ENCODE measurements at regions of chr1 and their contacts with region 1.

Region 1: GRCh38 chr1:98048244-98048643 is 127.4 kb upstream of the DPYD start:
- DNase-seq: peak; percentile 78
- H3K4me3 Mint-ChIP-seq: peak overlapping the region; percentile 51
- H3K27ac Mint-ChIP-seq: no peak overlapping the region
- H3K4me1 Mint-ChIP-seq: peaks cover 17% of the 10 kb centered on the region
- H3K27me3 Mint-ChIP-seq: no peaks in the 10 kb centered on the region
- CTCF ChIP-seq: no peak

Region 2: GRCh38 chr1:97145321-97145956 is 902.8 kb before region 1 on chr1:
- CTCF ChIA-PET with region 1: interaction called, 3 read pairs
- POLR2A ChIA-PET with region 1: no interaction called
- intact Hi-C with region 1: loop called (anchors 10 kb)
- DNase-seq: peak; percentile 76
- H3K4me3 Mint-ChIP-seq: peak overlapping the region; percentile 25
- H3K27ac Mint-ChIP-seq: peak overlapping the region; percentile 93
- H3K4me1 Mint-ChIP-seq: peaks cover 40% of the 10 kb centered on the region
- H3K27me3 Mint-ChIP-seq: no peaks in the 10 kb centered on the region
- CTCF ChIP-seq: no peak

Region 3: DNA sequence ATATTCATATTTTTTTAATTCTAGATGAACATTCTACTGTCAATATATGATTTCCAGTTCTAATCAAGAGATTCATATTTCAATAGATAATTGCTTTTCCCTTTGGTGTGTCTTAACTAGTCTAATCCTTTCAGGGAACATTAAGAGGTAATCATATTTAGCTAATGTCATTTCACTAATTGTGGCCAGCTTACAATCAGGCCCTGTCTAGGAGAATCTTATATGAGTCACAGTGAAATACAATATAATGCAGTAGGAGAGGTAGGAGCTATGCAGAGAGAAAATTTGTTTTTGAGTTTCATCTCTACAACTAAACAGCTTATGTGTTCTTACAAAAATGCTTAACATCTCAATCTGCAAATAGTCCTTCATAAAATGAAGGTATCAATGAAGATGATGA is 213.3 kb before region 1 on chr1:
- CTCF ChIA-PET with region 1: no interaction called
- POLR2A ChIA-PET with region 1: no interaction called
- intact Hi-C with region 1: loop called (anchors 5 kb)
- DNase-seq: no peak
- H3K4me3 Mint-ChIP-seq: no peak overlapping the region
- H3K27ac Mint-ChIP-seq: no peak overlapping the region
- H3K4me1 Mint-ChIP-seq: no peaks in the 10 kb centered on the region
- H3K27me3 Mint-ChIP-seq: no peaks in the 10 kb centered on the region
- CTCF ChIP-seq: no peak

Region 4: DNA sequence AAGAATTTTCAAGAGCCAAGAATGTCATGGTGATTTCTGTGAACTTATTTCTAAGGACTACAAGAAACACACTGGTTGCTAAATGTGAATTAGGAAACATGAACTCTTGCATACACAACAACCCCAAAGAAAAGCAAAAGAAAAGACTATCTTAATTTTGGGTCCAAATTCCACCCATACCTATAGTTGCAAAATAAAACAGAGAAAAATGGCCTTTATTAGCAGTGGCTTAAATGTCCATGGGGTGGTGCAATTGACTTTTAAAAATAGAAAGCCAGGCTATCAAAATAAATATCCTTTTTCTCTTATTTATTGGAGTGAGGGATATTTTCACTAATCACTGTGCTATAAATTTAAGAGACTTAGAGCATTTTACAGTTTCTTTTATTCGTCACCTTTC is 46.5 kb before region 1 on chr1:
- CTCF ChIA-PET with region 1: no interaction called
- POLR2A ChIA-PET with region 1: no interaction called
- intact Hi-C with region 1: loop called (anchors 5 kb)
- DNase-seq: peak; percentile 3
- H3K4me3 Mint-ChIP-seq: no peak overlapping the region
- H3K27ac Mint-ChIP-seq: no peak overlapping the region
- H3K4me1 Mint-ChIP-seq: peaks cover 12% of the 10 kb centered on the region
- H3K27me3 Mint-ChIP-seq: no peaks in the 10 kb centered on the region
- CTCF ChIP-seq: no peak

Measured in MCF 10A (cell line).